ENCODE measurements at regions of chr6 and their contacts with region 1.

Region 1: DNA sequence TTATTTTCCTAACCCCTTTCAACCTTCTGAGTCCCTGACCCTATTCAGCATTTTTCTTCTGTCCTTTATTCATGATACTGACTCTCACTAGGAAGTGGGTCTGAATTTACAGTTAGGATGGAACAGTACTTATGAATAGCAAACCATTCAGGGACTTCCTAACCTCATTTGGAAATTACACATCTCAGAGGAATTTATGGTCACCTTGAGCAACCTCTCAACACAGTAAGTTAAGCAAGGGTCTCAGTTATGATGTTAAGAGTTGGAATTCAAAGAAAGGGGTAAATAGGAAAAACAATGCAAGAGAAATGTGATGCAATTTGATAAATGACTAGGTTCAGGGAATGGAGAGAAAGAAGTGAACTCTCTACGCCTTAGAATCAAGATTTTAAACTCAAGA is 97.3 kb downstream of the GPR6 start:
- DNase-seq: no peak
- H3K4me3 ChIP-seq: no peak overlapping the region
- H3K27ac ChIP-seq: no peak overlapping the region
- H3K4me1 ChIP-seq: no peaks in the 10 kb centered on the region
- H3K27me3 ChIP-seq: no peaks in the 10 kb centered on the region

Region 2: GRCh38 chr6:110063594-110064263 is 11.7 kb before region 1 on chr6:
- CTCF ChIA-PET with region 1: no interaction called
- POLR2A ChIA-PET with region 1: no interaction called
- DNase-seq: no peak
- H3K4me3 ChIP-seq: no peak overlapping the region
- H3K27ac ChIP-seq: no peak overlapping the region
- H3K4me1 ChIP-seq: no peaks in the 10 kb centered on the region
- H3K27me3 ChIP-seq: no peaks in the 10 kb centered on the region

Region 3: DNA sequence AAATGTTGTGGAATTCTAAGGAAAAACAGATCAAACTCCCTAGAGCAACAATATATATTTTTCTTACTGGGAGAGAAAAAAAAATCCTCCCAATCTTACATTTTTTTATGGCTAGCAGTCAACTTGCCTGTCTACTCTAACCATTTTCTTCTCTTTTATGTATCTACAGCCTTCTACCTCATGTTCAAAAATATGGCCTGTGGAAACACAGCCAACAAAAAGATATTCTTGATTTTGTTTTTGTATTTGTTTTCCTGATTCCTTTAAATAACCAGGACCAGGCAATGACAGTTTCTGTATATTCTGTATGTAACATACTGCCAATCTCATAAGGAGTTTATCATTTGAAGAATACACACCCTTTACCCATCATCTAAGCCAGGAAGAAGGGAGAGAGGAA is 998.9 kb after region 1 on chr6:
- CTCF ChIA-PET with region 1: no interaction called
- POLR2A ChIA-PET with region 1: interaction called, 11 read pairs
- DNase-seq: no peak
- H3K4me3 ChIP-seq: no peak overlapping the region
- H3K27ac ChIP-seq: no peak overlapping the region
- H3K4me1 ChIP-seq: peaks cover 0 to 8% (median 2%) of the 10 kb centered on the region in 4 experiments
- H3K27me3 ChIP-seq: peaks cover 0 to 1% (median 0%) of the 10 kb centered on the region in 5 experiments

Measured in common myeloid progenitor, CD34-positive (primary cell).